Activated naive CD4-positive, alpha-beta T cell treated with anti-CD3 and anti-CD28 coated beads for 36 hours (primary cell): ENCODE measurements at regions of chr12 and their contacts with region 1.

Region 1: GRCh38 chr12:104108755-104109445 is 29.1 kb downstream of the NFYB start:
- DNase-seq: peak; percentile 96
- H3K4me3 Mint-ChIP-seq: no peak overlapping the region
- H3K27ac Mint-ChIP-seq: no peak overlapping the region
- H3K4me1 Mint-ChIP-seq: peaks cover 7% of the 10 kb centered on the region
- H3K27me3 Mint-ChIP-seq: no peaks in the 10 kb centered on the region

Region 2: DNA sequence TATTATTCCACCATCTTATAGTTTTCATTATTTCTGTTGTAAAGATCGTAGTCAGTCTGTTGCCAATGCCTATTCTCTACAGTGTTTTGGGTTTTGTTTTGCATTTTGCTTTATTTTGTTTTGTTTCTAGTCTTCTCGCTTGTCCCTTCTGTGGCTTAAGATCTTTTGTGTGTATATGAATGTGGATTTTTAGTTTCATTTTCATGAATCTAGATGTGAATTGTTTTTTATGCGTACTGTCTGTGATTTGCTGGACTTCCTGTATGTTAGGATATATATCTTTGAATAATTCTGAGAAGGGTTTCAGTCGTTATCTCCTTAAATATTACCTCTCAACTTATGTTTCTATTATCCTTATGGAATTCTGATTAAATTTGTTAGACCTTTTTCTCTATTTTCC is 626.5 kb before region 1 on chr12:
- CTCF ChIA-PET with region 1: no interaction called
- intact Hi-C with region 1: no loop called
- DNase-seq: no peak
- H3K4me3 Mint-ChIP-seq: peak overlapping the region; percentile 41
- H3K27ac Mint-ChIP-seq: no peak overlapping the region
- H3K4me1 Mint-ChIP-seq: peaks cover 5% of the 10 kb centered on the region
- H3K27me3 Mint-ChIP-seq: no peaks in the 10 kb centered on the region

Region 3: GRCh38 chr12:103771466-103771865 is 337.4 kb before region 1 on chr12:
- CTCF ChIA-PET with region 1: interaction called, 7 read pairs
- intact Hi-C with region 1: loop called (anchors 2 kb)
- DNase-seq: peak; percentile 35
- H3K4me3 Mint-ChIP-seq: no peak overlapping the region
- H3K27ac Mint-ChIP-seq: no peak overlapping the region
- H3K4me1 Mint-ChIP-seq: no peaks in the 10 kb centered on the region
- H3K27me3 Mint-ChIP-seq: no peaks in the 10 kb centered on the region

Region 4: GRCh38 chr12:103965590-103966504 is 143.1 kb before region 1 on chr12 and contains the start of gene TDG:
- CTCF ChIA-PET with region 1: interaction called, 6 read pairs
- intact Hi-C with region 1: loop called (anchors 2 kb)
- DNase-seq: peak; percentile 99
- H3K4me3 Mint-ChIP-seq: peak within 1 kb of the TSS; percentile 96
- H3K27ac Mint-ChIP-seq: peak within 1 kb of the TSS; percentile 97
- H3K4me1 Mint-ChIP-seq: peaks cover 48% of the 10 kb centered on the region
- H3K27me3 Mint-ChIP-seq: no peaks in the 10 kb centered on the region
- total RNA-seq, gene TDG: 18.0 to 19.3 TPM

Region 5: GRCh38 chr12:104064031-104064822 is 44.7 kb before region 1 on chr12 and contains the start of gene HCFC2:
- CTCF ChIA-PET with region 1: interaction called, 106 read pairs
- intact Hi-C with region 1: no loop called
- DNase-seq: peak; percentile 91
- H3K4me3 Mint-ChIP-seq: peak within 1 kb of the TSS; percentile 93
- H3K27ac Mint-ChIP-seq: peak within 1 kb of the TSS; percentile 84
- H3K4me1 Mint-ChIP-seq: peaks cover 16% of the 10 kb centered on the region
- H3K27me3 Mint-ChIP-seq: peaks cover 16% of the 10 kb centered on the region
- total RNA-seq, gene HCFC2: 7.4 to 8.3 TPM

Region 6: GRCh38 chr12:104097954-104098353 is 10.9 kb before region 1 on chr12:
- CTCF ChIA-PET with region 1: interaction called, 43 read pairs
- intact Hi-C with region 1: no loop called
- DNase-seq: no peak
- H3K4me3 Mint-ChIP-seq: no peak overlapping the region
- H3K27ac Mint-ChIP-seq: no peak overlapping the region
- H3K4me1 Mint-ChIP-seq: peaks cover 8% of the 10 kb centered on the region
- H3K27me3 Mint-ChIP-seq: no peaks in the 10 kb centered on the region